ENCODE measurements at regions of chr17 and their contacts with region 1.

Region 1: GRCh38 chr17:73278049-73278464 is 16.4 kb upstream of the CPSF4L start:
- DNase-seq: no peak
- H3K4me3 ChIP-seq: no peak overlapping the region
- H3K4me3 Mint-ChIP-seq: no peak overlapping the region
- H3K27ac Mint-ChIP-seq: no peak overlapping the region
- H3K4me1 ChIP-seq: no peaks in the 10 kb centered on the region
- H3K4me1 Mint-ChIP-seq: peaks cover 5% of the 10 kb centered on the region
- H3K27me3 ChIP-seq: no peaks in the 10 kb centered on the region
- H3K27me3 Mint-ChIP-seq: no peaks in the 10 kb centered on the region
- CTCF ChIP-seq: no peak

Region 2: GRCh38 chr17:73261952-73262675 is 15.9 kb before region 1 on chr17:
- CTCF ChIA-PET with region 1: no interaction called
- POLR2A ChIA-PET with region 1: no interaction called
- intact Hi-C with region 1: no loop called
- DNase-seq: no peak
- H3K4me3 ChIP-seq: no peak overlapping the region
- H3K4me3 Mint-ChIP-seq: no peak overlapping the region
- H3K27ac Mint-ChIP-seq: no peak overlapping the region
- H3K4me1 ChIP-seq: no peaks in the 10 kb centered on the region
- H3K4me1 Mint-ChIP-seq: no peaks in the 10 kb centered on the region
- H3K27me3 ChIP-seq: no peaks in the 10 kb centered on the region
- H3K27me3 Mint-ChIP-seq: no peaks in the 10 kb centered on the region
- CTCF ChIP-seq: no peak

Region 3: DNA sequence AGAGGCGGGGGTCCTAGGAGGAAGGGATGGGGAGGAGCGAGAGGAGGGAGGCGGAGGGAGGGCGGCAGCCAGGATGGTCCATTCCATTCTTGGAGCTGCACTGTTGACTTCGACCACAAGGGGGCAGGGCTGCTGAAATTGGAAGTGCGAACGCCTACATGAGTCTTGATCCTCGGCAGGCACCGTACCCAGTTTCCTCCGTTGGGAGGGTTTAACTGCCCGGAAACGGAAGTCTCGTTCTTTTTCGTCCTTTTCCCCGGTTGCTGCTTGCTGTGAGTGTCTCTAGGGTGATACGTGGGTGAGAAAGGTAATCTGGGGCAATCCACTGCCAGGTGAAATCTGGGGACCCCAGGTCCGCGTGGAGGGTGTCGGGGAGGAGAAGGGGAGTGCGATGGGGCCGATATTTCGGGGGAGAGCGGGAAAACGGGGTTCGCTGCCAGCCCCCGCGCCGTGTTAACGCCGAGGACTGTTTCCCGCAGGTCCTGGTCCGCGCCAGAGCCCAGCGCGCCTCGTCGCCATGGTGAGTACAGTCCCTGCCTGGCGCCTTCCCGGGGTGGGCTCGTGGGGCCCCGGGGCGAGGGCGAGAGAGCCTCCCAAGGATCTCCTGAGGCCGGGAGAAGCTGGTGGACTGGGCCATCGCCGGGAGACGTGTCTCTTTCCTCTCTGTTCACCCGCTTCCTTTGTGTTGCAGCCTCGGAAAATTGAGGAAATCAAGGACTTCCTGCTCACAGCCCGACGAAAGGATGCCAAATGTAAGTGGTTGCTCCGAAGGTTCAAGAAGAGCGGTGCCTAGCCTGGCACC is 925.6 kb after region 1 on chr17 and contains the start of gene RPL38:
- CTCF ChIA-PET with region 1: no interaction called
- POLR2A ChIA-PET with region 1: interaction called, 14 read pairs
- intact Hi-C with region 1: no loop called
- DNase-seq: peak; percentile 96
- H3K4me3 ChIP-seq: peak within 1 kb of the TSS; percentile 99
- H3K4me3 Mint-ChIP-seq: peak within 1 kb of the TSS; percentile 100
- H3K27ac Mint-ChIP-seq: peak within 1 kb of the TSS; percentile 100
- H3K4me1 ChIP-seq: peaks cover 16% of the 10 kb centered on the region
- H3K4me1 Mint-ChIP-seq: peaks cover 21% of the 10 kb centered on the region
- H3K27me3 ChIP-seq: peaks cover 1% of the 10 kb centered on the region; the same call in 1 of the 2 replicates
- H3K27me3 Mint-ChIP-seq: peaks cover 16% of the 10 kb centered on the region
- CTCF ChIP-seq: peak; percentile 97
- total RNA-seq, gene RPL38: 1,319 and 1,408 TPM in 2 replicates

Measured in Caco-2 (cell line).